SK-N-SH (cell line): ENCODE measurements at regions of chr3 and their contacts with region 1.

Region 1: DNA sequence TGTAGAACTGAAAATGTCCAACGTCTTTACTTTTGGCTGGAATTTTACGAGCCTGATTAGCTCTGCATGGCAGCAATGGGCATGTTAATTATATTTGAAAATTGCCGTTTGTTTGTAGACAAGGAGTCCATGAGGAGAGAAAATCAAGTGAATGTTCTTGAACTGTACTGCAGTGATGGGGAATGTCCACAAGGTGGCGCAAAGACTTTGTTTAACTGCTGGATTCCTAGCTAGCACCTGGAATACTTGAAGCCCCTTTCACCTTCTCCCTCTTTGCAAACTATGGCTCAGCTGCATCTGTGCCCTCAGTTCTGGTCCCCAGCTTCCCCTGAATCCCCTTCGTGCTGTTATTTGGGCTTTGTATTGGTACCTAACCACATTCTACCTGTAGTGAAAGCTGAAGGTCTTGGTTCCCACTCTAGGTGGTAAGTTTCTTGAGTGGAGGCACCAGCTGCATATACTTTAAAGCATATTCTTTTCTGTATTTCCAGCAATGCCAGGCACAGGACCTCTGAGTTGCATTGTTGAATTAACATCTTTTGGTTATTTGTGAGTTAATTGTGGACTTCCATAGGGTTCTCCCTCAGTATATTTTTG is 25.3 kb downstream of the EXOG start:
- DNase-seq: peak; percentile 70
- H3K4me3 ChIP-seq: peak overlapping the region in 1 of 2 experiments; percentile 13; a peak in 1 of 4 replicates
- H3K27ac ChIP-seq: no peak overlapping the region
- H3K4me1 ChIP-seq: peaks cover 0 to 4% of the 10 kb centered on the region in 2 experiments; a peak in 3 of 4 replicates
- H3K27me3 ChIP-seq: no peaks in the 10 kb centered on the region
- CTCF ChIP-seq: peak; percentile 94
- EP300 ChIP-seq: no peak
- RAD21 ChIP-seq: peak; percentile 92

Region 2: DNA sequence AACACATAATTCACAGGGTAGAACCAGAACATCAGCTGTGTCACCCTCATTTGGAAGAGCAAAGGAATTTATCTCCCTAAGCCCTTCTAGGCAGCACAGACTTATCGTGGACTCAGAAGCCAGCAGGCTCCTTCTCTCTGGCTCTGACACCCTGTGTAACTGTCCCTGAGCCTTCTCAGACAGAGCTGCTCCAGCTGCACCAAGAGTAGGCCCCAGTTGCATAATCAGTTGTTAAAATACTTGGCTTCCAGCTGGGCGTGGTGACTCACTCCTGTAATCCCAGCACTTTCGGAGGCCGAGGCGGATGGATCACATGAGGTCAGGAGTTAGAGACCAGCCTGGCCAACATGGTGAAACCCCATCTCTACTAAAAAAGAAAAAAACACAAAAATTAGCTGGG is 117.2 kb before region 1 on chr3:
- CTCF ChIA-PET with region 1: no interaction called
- POLR2A ChIA-PET with region 1: no interaction called
- DNase-seq: no peak
- H3K4me3 ChIP-seq: no peak overlapping the region
- H3K27ac ChIP-seq: no peak overlapping the region
- H3K4me1 ChIP-seq: no peaks in the 10 kb centered on the region
- H3K27me3 ChIP-seq: no peaks in the 10 kb centered on the region
- CTCF ChIP-seq: no peak
- EP300 ChIP-seq: no peak
- RAD21 ChIP-seq: no peak

Region 3: DNA sequence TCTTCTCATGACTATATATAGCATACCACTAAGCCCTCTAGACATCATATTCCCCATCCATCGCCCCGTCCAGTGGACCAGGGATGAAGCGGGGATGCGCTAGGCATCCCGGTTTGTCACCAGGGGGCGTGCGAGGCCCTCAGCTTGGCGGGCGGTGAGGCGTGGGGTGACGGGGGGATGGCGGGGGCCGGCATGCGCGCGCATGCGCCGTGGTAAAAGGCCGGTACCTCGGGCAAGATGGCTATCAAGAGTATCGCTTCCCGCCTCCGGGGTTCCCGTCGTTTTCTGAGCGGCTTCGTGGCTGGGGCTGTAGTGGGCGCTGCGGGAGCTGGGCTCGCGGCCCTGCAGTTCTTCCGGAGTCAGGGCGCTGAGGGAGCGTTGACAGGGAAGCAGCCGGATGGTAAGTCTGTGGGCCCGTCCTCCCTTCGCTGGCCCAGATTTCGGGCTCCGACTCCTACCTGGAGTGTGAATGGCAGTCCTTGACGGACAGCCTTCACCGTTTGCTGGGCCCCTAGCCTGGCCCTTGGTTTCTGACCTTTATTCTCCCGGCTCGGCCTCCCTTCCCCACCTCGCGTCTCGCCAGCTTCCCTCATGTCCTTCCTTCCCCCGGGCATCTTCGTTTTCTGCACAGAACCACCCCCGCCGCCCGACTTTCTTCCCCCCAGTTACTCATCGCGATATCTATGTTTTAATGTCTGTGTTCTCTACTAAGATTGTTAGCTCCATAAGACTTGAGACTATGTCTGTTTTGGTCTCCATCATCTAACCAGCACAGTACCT is 25.2 kb before region 1 on chr3 and contains the start of gene EXOG:
- CTCF ChIA-PET with region 1: interaction called, 40 read pairs
- POLR2A ChIA-PET with region 1: no interaction called
- DNase-seq: peak; percentile 98
- H3K4me3 ChIP-seq: peak within 1 kb of the TSS; percentile 55 to 75
- H3K27ac ChIP-seq: peak within 1 kb of the TSS; percentile 59 to 77; a peak in 3 of 4 replicates
- H3K4me1 ChIP-seq: peaks cover 0 to 4% of the 10 kb centered on the region in 2 experiments; a peak in 3 of 4 replicates
- H3K27me3 ChIP-seq: no peaks in the 10 kb centered on the region
- CTCF ChIP-seq: peak; percentile 91
- EP300 ChIP-seq: peak in 1 of 2 experiments; percentile 13; a peak in 1 of 4 replicates
- RAD21 ChIP-seq: peak; percentile 81
- polyA plus RNA-seq, gene EXOG: 6.2 and 8.8 TPM in 2 replicates

Region 4: GRCh38 chr3:38574411-38575278 is 53.2 kb after region 1 on chr3:
- CTCF ChIA-PET with region 1: interaction called, 21 read pairs
- POLR2A ChIA-PET with region 1: no interaction called
- DNase-seq: peak; percentile 74
- H3K4me3 ChIP-seq: no peak overlapping the region
- H3K27ac ChIP-seq: peak overlapping the region in 1 of 2 experiments; percentile 83; a peak in 2 of 4 replicates
- H3K4me1 ChIP-seq: peaks cover 0 to 44% of the 10 kb centered on the region in 2 experiments; a peak in 1 of 4 replicates
- H3K27me3 ChIP-seq: no peaks in the 10 kb centered on the region
- CTCF ChIP-seq: no peak
- EP300 ChIP-seq: peak in 1 of 2 experiments; percentile 61; a peak in 1 of 4 replicates
- RAD21 ChIP-seq: no peak; the same call in 1 of the 2 replicates

Region 5: GRCh38 chr3:38603731-38604131 is 82.2 kb after region 1 on chr3:
- CTCF ChIA-PET with region 1: interaction called, 20 read pairs
- POLR2A ChIA-PET with region 1: no interaction called
- DNase-seq: no peak
- H3K4me3 ChIP-seq: no peak overlapping the region
- H3K27ac ChIP-seq: no peak overlapping the region
- H3K4me1 ChIP-seq: peaks cover 0 to 15% of the 10 kb centered on the region in 2 experiments; a peak in 1 of 4 replicates
- H3K27me3 ChIP-seq: no peaks in the 10 kb centered on the region
- CTCF ChIP-seq: no peak
- EP300 ChIP-seq: no peak
- RAD21 ChIP-seq: no peak

Region 6: DNA sequence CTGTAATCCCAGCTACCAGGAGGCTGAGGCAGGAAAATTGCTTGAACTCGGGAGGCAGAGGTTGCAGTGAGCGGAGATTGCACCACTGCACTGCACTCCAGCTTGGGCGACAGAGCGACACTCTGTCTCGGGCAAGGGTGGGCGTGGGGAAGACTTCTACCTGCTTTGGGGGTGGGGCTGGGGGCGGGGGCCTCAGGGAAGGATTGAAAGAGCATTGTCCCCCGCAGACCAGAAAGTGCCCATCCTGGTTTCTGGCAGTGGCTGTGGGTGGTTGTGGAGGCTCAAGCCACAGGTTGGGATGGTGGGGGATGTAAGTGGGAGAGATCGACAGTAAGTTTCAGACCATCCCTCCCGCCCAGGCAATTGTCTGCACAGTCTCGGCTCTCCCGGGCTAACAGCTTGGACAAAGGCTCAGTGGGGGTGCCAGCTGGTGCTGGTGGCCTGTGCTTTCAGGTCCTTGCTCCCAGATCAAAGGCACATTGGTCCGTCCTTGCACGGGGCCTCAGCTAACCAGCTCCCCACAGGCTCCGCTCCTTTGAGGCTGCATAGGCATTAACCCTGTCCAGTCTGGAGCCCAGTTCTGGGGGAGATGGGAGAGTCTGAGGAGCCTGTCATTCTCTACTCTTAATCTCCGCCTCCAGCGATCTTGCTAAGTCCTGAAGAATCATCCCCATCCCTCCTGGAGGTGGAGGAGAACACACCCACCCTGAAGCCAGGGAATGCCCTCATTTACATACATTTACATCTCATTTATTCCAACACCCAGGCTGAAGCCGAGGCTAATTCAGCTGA is 119.4 kb after region 1 on chr3:
- CTCF ChIA-PET with region 1: interaction called, 13 read pairs
- POLR2A ChIA-PET with region 1: no interaction called
- DNase-seq: no peak
- H3K4me3 ChIP-seq: no peak overlapping the region
- H3K27ac ChIP-seq: no peak overlapping the region
- H3K4me1 ChIP-seq: no peaks in the 10 kb centered on the region
- H3K27me3 ChIP-seq: no peaks in the 10 kb centered on the region
- CTCF ChIP-seq: no peak
- EP300 ChIP-seq: no peak
- RAD21 ChIP-seq: no peak

Region 7: GRCh38 chr3:39000008-39000450 is 478.5 kb after region 1 on chr3:
- CTCF ChIA-PET with region 1: interaction called, 32 read pairs
- POLR2A ChIA-PET with region 1: no interaction called
- DNase-seq: peak; percentile 60
- H3K4me3 ChIP-seq: peak overlapping the region in 1 of 2 experiments; percentile 36; a peak in 1 of 4 replicates
- H3K27ac ChIP-seq: no peak overlapping the region
- H3K4me1 ChIP-seq: no peaks in the 10 kb centered on the region
- H3K27me3 ChIP-seq: no peaks in the 10 kb centered on the region
- CTCF ChIP-seq: peak; percentile 88
- EP300 ChIP-seq: no peak
- RAD21 ChIP-seq: peak; percentile 86